Dendritic cell treated with granulocyte-macrophage colony-stimulating factor and Interleukin-4, amounts not matched to agents 40 ng/mL and 50 ng/mL, for 4 days (primary cell): ENCODE measurements at regions of chr14 and their contacts with region 1.

Region 1: GRCh38 chr14:23186913-23187654 is 3.6 kb upstream of the SLC7A8 start:
- H3K4me3 Mint-ChIP-seq: no peak overlapping the region
- H3K27ac Mint-ChIP-seq: no peak overlapping the region
- H3K4me1 Mint-ChIP-seq: peaks cover 12% of the 10 kb centered on the region
- H3K27me3 Mint-ChIP-seq: no peaks in the 10 kb centered on the region

Region 2: GRCh38 chr14:23076785-23077408 is 110.2 kb before region 1 on chr14:
- intact Hi-C with region 1: loop called (anchors 5 kb)
- H3K4me3 Mint-ChIP-seq: no peak overlapping the region
- H3K27ac Mint-ChIP-seq: no peak overlapping the region
- H3K4me1 Mint-ChIP-seq: peaks cover 67% of the 10 kb centered on the region
- H3K27me3 Mint-ChIP-seq: no peaks in the 10 kb centered on the region